ENCODE measurements at regions of chr13 and their contacts with region 1.

Region 1: DNA sequence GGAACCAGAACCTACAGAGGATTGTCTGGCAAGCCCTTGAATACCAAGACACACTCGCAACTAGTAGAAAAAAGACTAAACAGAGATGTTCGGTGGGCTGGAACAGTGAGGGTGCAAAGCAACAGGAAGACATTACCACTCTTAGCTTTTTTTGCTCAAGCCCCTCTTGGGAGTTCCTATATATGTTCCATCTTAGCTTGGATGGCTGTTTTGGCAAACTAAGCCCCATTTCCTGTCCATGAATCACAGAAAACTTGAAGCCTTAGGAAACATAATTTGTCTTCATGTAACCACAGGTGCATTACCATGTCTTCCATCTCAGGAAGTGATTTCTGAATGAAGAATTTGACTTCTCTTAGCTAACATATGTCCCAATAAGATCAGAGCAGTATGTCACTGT is 446.3 kb downstream of the OLFM4 start:
- DNase-seq: no peak
- H3K4me3 ChIP-seq: no peak overlapping the region
- H3K27ac ChIP-seq: no peak overlapping the region
- H3K4me1 ChIP-seq: no peaks in the 10 kb centered on the region
- H3K27me3 ChIP-seq: no peaks in the 10 kb centered on the region
- CTCF ChIP-seq: no peak
- EP300 ChIP-seq: no peak
- POLR2A ChIP-seq: no peak

Region 2: GRCh38 chr13:53151336-53152056 is 323.4 kb before region 1 on chr13:
- in situ Hi-C with region 1: no loop called
- intact Hi-C with region 1: no loop called
- DNase-seq: peak; percentile 44
- H3K4me3 ChIP-seq: no peak overlapping the region
- H3K27ac ChIP-seq: no peak overlapping the region
- H3K4me1 ChIP-seq: no peaks in the 10 kb centered on the region
- H3K27me3 ChIP-seq: peaks cover 4% of the 10 kb centered on the region
- CTCF ChIP-seq: peak; percentile 58 to 73 (median 68)
- EP300 ChIP-seq: no peak
- POLR2A ChIP-seq: no peak

Region 3: DNA sequence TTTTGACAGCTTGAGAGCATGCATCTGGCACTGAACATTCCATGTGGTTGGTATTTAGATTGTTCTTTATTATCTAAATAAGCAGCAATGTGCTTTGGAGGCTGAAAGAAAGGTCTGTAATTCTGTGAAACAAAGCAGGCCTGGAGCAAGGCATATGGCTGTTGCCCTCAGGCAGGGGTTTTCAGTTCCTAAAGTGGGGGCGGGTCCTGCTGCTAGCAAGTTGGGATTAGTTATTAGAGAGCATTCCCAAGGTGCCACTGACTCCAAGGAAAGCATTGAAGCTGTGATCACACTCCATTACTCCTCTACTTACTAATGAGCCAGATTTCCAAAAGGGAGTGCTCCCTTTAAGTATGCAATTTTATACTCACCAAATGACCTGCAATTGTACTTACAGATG is 14.1 kb before region 1 on chr13:
- in situ Hi-C with region 1: no loop called
- intact Hi-C with region 1: loop called (anchors 1 kb)
- DNase-seq: no peak
- H3K4me3 ChIP-seq: no peak overlapping the region
- H3K27ac ChIP-seq: no peak overlapping the region
- H3K4me1 ChIP-seq: no peaks in the 10 kb centered on the region
- H3K27me3 ChIP-seq: no peaks in the 10 kb centered on the region
- CTCF ChIP-seq: no peak
- EP300 ChIP-seq: no peak
- POLR2A ChIP-seq: no peak

Region 4: GRCh38 chr13:53520132-53520531 is 45.3 kb after region 1 on chr13:
- in situ Hi-C with region 1: loop called in 1 of 4 experiments (anchors 10 kb)
- intact Hi-C with region 1: no loop called
- DNase-seq: no peak
- H3K4me3 ChIP-seq: no peak overlapping the region
- H3K27ac ChIP-seq: no peak overlapping the region
- H3K4me1 ChIP-seq: no peaks in the 10 kb centered on the region
- H3K27me3 ChIP-seq: no peaks in the 10 kb centered on the region
- CTCF ChIP-seq: no peak
- EP300 ChIP-seq: no peak
- POLR2A ChIP-seq: no peak

Region 5: DNA sequence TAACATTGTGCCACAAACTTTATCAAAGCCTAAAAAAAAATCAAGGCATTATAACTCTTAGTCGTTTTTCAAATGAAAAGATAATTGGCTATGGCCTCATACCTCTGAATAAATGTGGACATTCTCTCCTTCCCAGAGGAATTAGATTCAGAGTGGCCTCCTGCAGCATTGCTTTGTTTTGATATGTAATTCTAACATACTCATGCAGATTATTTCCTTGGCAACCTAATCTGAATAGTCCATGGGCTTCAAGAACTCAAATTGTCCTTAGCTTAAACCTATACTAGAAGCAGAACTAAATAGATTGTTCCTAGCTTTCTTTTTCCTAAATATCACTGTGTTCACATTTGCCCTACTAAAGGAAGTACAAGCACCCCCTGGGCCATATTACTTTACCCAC is 700.6 kb after region 1 on chr13:
- in situ Hi-C with region 1: no loop called
- intact Hi-C with region 1: no loop called
- DNase-seq: no peak
- H3K4me3 ChIP-seq: no peak overlapping the region
- H3K27ac ChIP-seq: no peak overlapping the region
- H3K4me1 ChIP-seq: no peaks in the 10 kb centered on the region
- H3K27me3 ChIP-seq: no peaks in the 10 kb centered on the region
- CTCF ChIP-seq: no peak
- EP300 ChIP-seq: no peak
- POLR2A ChIP-seq: no peak